SK-N-SH (cell line): ENCODE measurements at regions of chr3 and their contacts with region 1.

Region 1: GRCh38 chr3:122942937-122943827 is 84.4 kb downstream of the SEMA5B start:
- DNase-seq: peak; percentile 91
- H3K4me3 ChIP-seq: no peak overlapping the region; a peak in 1 of 4 replicates
- H3K27ac ChIP-seq: no peak overlapping the region
- H3K4me1 ChIP-seq: peaks cover 10 to 20% of the 10 kb centered on the region in 2 experiments; a peak in 2 of 4 replicates
- H3K27me3 ChIP-seq: no peaks in the 10 kb centered on the region
- CTCF ChIP-seq: peak; percentile 95
- EP300 ChIP-seq: no peak
- RAD21 ChIP-seq: peak; percentile 92

Region 2: DNA sequence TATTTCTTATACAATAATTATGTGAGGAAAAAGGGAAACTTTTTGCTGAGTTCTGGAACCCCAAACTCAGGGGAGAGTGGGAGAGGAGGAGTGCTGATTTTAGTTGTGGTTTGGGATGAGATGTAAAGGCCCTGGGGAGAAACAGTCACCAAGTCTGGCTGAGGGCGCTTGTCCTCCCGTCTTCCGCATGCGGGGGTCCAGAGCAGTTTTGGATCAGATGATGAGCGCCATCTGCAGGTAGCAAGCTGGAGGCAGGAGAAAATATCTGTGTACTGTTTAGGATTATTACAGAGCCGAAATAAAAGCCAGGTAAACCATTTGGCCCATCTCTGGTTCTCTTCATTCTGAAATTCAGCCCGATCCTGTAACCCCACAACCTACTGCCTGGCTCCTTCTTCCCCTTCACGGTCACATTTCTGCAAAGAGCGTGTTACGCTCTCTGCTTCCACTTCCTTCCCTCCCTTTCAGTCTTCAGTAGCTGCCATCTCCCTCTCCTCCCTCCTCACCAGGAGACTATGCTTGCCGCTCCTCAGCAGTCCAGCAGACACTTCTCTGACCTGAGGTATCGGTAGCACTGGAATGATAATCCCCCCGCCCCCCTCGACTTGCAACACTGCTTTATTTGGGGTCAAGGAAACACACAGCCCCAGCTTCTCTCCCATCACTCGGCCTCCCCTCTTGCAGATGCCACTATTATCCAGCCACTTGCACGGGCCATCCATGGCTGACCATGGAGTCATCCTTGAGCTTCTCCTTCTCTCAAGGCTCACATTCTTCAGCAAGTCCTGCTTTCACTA is 263.9 kb before region 1 on chr3:
- CTCF ChIA-PET with region 1: interaction called, 10 read pairs
- POLR2A ChIA-PET with region 1: no interaction called
- DNase-seq: peak; percentile 74
- H3K4me3 ChIP-seq: peak overlapping the region in 1 of 2 experiments; percentile 34; a peak in 1 of 4 replicates
- H3K27ac ChIP-seq: no peak overlapping the region
- H3K4me1 ChIP-seq: peaks cover 12 to 16% of the 10 kb centered on the region in 2 experiments; a peak in 3 of 4 replicates
- H3K27me3 ChIP-seq: no peaks in the 10 kb centered on the region
- CTCF ChIP-seq: peak; percentile 86
- EP300 ChIP-seq: no peak
- RAD21 ChIP-seq: peak; percentile 93

Region 3: GRCh38 chr3:122754929-122755328 is 188.3 kb before region 1 on chr3:
- CTCF ChIA-PET with region 1: no interaction called
- POLR2A ChIA-PET with region 1: no interaction called
- DNase-seq: peak; percentile 30
- H3K4me3 ChIP-seq: peak overlapping the region in 1 of 2 experiments; percentile 4; a peak in 1 of 4 replicates
- H3K27ac ChIP-seq: no peak overlapping the region
- H3K4me1 ChIP-seq: no peaks in the 10 kb centered on the region
- H3K27me3 ChIP-seq: no peaks in the 10 kb centered on the region
- CTCF ChIP-seq: peak; percentile 71
- EP300 ChIP-seq: no peak
- RAD21 ChIP-seq: peak; percentile 64

Region 4: DNA sequence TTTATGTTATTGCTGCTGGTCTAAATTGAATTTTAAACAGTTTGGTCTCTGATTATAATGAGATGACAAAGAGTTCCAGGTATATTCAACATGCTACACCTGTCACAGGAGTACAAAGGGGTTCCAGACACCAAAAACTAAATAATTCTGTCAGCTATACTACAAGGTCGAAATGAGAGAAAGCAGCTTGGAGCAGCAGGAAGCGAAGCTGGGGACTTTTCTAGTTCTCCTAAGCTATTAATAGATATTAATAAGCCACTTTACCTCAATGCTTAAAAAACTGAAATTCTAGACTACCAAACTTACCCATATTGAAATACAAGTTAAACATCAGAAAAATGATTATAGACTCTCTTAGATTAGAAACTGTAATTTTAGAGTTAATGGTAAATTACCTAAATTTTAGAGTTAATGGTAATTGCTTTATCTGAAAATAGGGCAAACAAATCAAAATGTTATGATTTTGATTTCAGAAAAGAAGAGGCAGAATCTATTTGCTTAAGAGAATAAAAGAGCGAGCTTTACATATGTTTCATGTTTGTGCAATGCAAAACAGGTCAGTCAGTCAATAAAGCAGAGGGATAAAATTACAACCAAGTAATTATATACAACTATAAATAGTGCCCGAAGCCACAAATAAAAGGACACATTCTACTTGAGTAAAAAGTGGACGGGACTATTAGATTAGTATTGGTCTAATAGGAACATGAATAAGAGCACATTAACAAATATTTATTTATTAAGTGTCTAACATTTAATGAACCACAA is 166.3 kb before region 1 on chr3:
- CTCF ChIA-PET with region 1: no interaction called
- POLR2A ChIA-PET with region 1: no interaction called
- DNase-seq: no peak
- H3K4me3 ChIP-seq: no peak overlapping the region
- H3K27ac ChIP-seq: no peak overlapping the region
- H3K4me1 ChIP-seq: no peaks in the 10 kb centered on the region
- H3K27me3 ChIP-seq: no peaks in the 10 kb centered on the region
- CTCF ChIP-seq: no peak
- EP300 ChIP-seq: no peak
- RAD21 ChIP-seq: no peak

Region 5: GRCh38 chr3:122918576-122919290 is 24.4 kb before region 1 on chr3:
- CTCF ChIA-PET with region 1: interaction called, 13 read pairs
- POLR2A ChIA-PET with region 1: no interaction called
- DNase-seq: no peak
- H3K4me3 ChIP-seq: no peak overlapping the region
- H3K27ac ChIP-seq: no peak overlapping the region
- H3K4me1 ChIP-seq: no peaks in the 10 kb centered on the region
- H3K27me3 ChIP-seq: no peaks in the 10 kb centered on the region; the same call in 1 of the 2 replicates
- CTCF ChIP-seq: no peak
- EP300 ChIP-seq: no peak
- RAD21 ChIP-seq: no peak

Region 6: GRCh38 chr3:122975163-122975923 is 32.2 kb after region 1 on chr3:
- CTCF ChIA-PET with region 1: interaction called, 45 read pairs
- POLR2A ChIA-PET with region 1: no interaction called
- DNase-seq: peak; percentile 78
- H3K4me3 ChIP-seq: peak overlapping the region; percentile 30 to 51
- H3K27ac ChIP-seq: peak overlapping the region; percentile 90 to 97
- H3K4me1 ChIP-seq: peaks cover 46 to 58% of the 10 kb centered on the region in 2 experiments
- H3K27me3 ChIP-seq: no peaks in the 10 kb centered on the region
- CTCF ChIP-seq: no peak
- EP300 ChIP-seq: peak; percentile 90 to 99
- RAD21 ChIP-seq: peak; percentile 31

Region 7: DNA sequence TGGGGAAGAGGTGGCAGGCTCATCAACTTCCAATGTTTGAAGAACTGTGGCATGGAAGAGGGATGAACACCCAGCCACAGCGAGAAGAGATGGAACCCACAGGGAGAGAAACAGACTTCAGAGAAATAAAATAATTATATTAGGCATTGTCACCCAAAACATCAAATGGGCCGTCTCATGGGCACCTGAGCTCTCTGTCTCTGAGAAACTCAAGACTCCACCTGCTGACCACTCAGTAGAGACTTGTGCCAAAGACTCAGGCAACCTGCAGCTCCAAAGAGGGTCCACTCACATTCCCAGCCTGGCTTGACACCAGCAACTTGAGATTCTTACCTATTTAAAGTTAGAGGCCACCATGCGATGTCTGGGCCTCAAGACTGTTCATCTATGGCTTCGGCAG is 72.4 kb after region 1 on chr3:
- CTCF ChIA-PET with region 1: interaction called, 342 read pairs
- POLR2A ChIA-PET with region 1: no interaction called
- DNase-seq: no peak
- H3K4me3 ChIP-seq: no peak overlapping the region
- H3K27ac ChIP-seq: no peak overlapping the region
- H3K4me1 ChIP-seq: no peaks in the 10 kb centered on the region; a peak in 1 of 4 replicates
- H3K27me3 ChIP-seq: peaks cover 23% of the 10 kb centered on the region; the same call in 1 of the 2 replicates
- CTCF ChIP-seq: no peak; the same call in 1 of the 2 replicates
- EP300 ChIP-seq: no peak
- RAD21 ChIP-seq: no peak

Region 8: GRCh38 chr3:123258811-123259420 is 315.7 kb after region 1 on chr3:
- CTCF ChIA-PET with region 1: interaction called, 11 read pairs
- POLR2A ChIA-PET with region 1: no interaction called
- DNase-seq: peak; percentile 56
- H3K4me3 ChIP-seq: no peak overlapping the region; a peak in 1 of 4 replicates
- H3K27ac ChIP-seq: no peak overlapping the region
- H3K4me1 ChIP-seq: peaks cover 0 to 3% of the 10 kb centered on the region in 2 experiments; a peak in 1 of 4 replicates
- H3K27me3 ChIP-seq: no peaks in the 10 kb centered on the region
- CTCF ChIP-seq: peak; percentile 78
- EP300 ChIP-seq: no peak
- RAD21 ChIP-seq: peak; percentile 92